H1 (cell line): ENCODE measurements at regions of chr5 and their contacts with region 1.

Region 1: DNA sequence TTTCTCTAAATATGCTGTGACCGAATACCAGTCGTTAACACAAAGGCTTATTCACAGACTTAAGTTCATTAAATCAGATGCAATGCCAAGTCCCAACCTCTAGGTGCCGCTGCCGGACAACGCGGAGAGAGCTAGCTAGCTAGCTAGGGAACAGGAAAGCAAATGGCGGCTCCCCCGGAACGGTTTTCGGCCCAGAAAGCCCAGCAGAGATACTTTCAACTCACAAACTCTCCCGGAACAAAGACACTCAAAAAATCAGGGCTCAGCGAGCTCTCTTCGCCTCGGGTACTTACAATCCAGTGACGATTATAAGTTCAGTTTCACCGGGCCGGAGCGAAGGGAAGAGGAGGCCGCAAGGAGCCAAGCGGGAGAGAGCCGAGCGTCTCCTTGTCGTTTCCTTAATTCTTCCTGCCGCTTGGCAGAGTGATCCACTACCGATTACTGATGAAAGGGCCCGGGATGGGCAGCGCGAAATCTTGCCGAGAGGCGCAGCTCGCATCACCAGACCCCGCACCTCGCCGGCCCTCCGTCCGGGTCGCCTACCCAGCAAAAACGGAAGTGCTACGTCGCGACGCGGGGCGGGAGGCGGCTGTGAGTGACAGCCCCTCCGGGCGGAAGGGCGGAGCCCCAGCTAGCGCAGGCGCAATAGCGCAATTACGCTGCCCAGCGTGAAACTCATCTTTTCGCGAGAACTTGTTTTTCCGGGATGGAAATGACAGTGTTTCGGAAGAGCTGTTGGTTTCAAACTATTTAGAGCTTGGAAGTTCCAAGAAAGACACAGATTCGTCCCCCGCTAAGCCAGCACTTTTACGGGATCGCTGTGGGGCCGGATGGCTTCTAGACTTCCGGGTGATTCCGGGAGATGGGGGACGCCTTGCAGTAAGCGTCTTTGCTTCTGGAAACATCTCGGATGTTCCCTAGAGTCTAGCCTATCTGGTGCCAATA is at the start of gene TAF7:
- DNase-seq: peak; percentile 77 to 95
- H3K4me3 ChIP-seq: peak within 1 kb of the TSS; percentile 79 to 99 (median 92)
- H3K27ac ChIP-seq: peak within 1 kb of the TSS; percentile 95
- H3K4me1 ChIP-seq: no peaks in the 10 kb centered on the region
- H3K27me3 ChIP-seq: no peaks in the 10 kb centered on the region
- CTCF ChIP-seq: peak; percentile 77 to 93 (median 80)
- EP300 ChIP-seq: no peak
- POLR2A ChIP-seq: peak; percentile 95 to 98
- RAD21 ChIP-seq: peak; percentile 45 to 57
- total RNA-seq, gene TAF7: 99.4 and 101 TPM in 2 replicates

Region 2: DNA sequence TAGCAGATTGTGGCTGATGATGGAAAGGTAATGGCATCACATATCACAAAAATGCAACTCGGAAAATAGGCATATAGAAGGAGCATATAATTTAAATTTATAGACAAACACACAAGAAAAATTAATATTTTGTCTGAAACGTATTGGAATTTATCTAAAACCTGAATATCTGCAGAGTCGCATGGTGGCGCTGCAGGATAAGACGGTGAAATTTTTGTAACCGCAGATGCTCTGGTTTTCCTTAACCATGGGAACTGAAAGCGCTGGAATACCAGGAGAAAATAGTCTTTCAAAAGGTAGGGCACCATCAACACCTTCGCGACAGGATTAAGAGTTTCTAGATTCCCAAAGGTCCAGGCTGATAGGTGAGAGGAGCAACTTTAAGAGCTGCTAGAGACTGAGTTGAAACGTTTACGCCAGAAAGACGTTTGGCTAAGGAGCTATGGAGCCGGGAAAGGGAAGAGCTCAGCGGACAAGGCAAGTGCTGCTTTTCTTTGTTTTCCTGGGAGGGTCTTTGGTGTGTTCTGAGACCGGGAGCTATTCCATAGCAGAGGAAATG is 86.3 kb before region 1 on chr5:
- CTCF ChIA-PET with region 1: interaction called, 19 read pairs
- POLR2A ChIA-PET with region 1: interaction called, 3 read pairs
- DNase-seq: no peak
- H3K4me3 ChIP-seq: no peak overlapping the region
- H3K27ac ChIP-seq: no peak overlapping the region
- H3K4me1 ChIP-seq: no peaks in the 10 kb centered on the region
- H3K27me3 ChIP-seq: no peaks in the 10 kb centered on the region
- CTCF ChIP-seq: no peak
- EP300 ChIP-seq: no peak
- POLR2A ChIP-seq: no peak
- RAD21 ChIP-seq: peak; percentile 37 to 59

Region 3: GRCh38 chr5:141369994-141370848 is 49.7 kb after region 1 on chr5 and contains the start of gene PCDHGB3:
- CTCF ChIA-PET with region 1: no interaction called
- POLR2A ChIA-PET with region 1: no interaction called
- DNase-seq: no peak
- H3K4me3 ChIP-seq: no peak within 1 kb of the TSS
- H3K27ac ChIP-seq: no peak within 1 kb of the TSS
- H3K4me1 ChIP-seq: no peaks in the 10 kb centered on the region
- H3K27me3 ChIP-seq: no peaks in the 10 kb centered on the region
- CTCF ChIP-seq: peak; percentile 14 to 28 (median 24); a peak in 3 of 4 replicates
- EP300 ChIP-seq: no peak
- POLR2A ChIP-seq: no peak
- RAD21 ChIP-seq: peak; percentile 43 to 50; a peak in 3 of 4 replicates
- total RNA-seq, gene PCDHGB3: 1.3 and 1.6 TPM in 2 replicates